Ovary (tissue), 10 donors: ENCODE measurements at regions of chr12 and their contacts with region 1.

Region 1: DNA sequence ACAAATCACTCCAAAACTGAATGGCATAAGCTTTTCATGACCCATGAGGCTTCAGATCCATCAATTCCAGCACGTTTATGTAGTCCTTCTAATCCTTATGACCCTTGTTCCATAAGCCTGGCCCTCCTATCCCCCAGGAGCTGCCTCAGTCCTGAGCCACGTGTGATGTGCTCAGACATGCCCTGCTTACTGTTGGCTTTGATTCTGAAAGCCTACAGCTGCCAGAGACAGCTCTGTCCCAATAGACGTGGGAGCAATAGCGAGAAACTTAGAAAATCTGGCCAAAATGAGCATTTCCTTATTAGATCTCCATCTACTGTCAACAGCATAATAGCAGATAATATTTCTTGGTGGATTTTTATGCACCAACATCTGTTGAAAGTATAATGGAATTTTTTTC is 33.2 kb downstream of the DUSP6 start:
- DNase-seq: no peak
- H3K4me3 ChIP-seq: no peak overlapping the region
- H3K27ac ChIP-seq: no peak overlapping the region
- H3K4me1 ChIP-seq: no peaks in the 10 kb centered on the region
- H3K27me3 ChIP-seq: no peaks in the 10 kb centered on the region
- CTCF ChIP-seq: no peak
- EP300 ChIP-seq: no peak
- POLR2A ChIP-seq: no peak

Region 2: GRCh38 chr12:89122852-89123251 is 196.3 kb before region 1 on chr12:
- intact Hi-C with region 1: loop called in 1 of 4 experiments (anchors 5 kb)
- DNase-seq: no peak
- H3K4me3 ChIP-seq: no peak overlapping the region
- H3K27ac ChIP-seq: no peak overlapping the region
- H3K4me1 ChIP-seq: no peaks in the 10 kb centered on the region
- H3K27me3 ChIP-seq: no peaks in the 10 kb centered on the region
- CTCF ChIP-seq: no peak
- EP300 ChIP-seq: no peak
- POLR2A ChIP-seq: no peak

Region 3: DNA sequence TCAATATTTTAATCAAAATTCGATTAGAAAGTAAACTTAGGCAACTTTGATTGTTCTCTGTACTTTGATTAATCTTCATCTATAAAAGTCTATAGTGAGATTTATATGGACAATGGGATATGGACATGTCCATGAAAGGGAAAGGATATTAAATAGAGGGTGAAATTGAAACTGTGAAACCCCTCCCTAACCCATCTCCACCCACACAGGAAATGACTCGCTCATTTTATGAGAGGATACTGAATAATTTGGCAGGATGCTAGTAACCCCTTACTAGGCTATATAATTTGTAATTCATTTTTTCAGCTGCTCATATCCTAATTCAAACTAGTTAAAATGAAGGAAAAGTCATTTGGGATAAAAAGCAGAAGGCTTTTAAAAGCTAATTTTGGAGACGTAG is 717.5 kb after region 1 on chr12:
- intact Hi-C with region 1: no loop called
- DNase-seq: no peak
- H3K4me3 ChIP-seq: no peak overlapping the region
- H3K27ac ChIP-seq: no peak overlapping the region
- H3K4me1 ChIP-seq: no peaks in the 10 kb centered on the region
- H3K27me3 ChIP-seq: no peaks in the 10 kb centered on the region
- CTCF ChIP-seq: no peak
- EP300 ChIP-seq: no peak
- POLR2A ChIP-seq: no peak